RWPE1 (cell line): ENCODE measurements at regions of chr15 and their contacts with region 1.

Region 1: GRCh38 chr15:56383010-56383409 is 17.8 kb downstream of the TEX9 start:
- DNase-seq: no peak
- H3K27ac ChIP-seq: no peak overlapping the region
- CTCF ChIP-seq: no peak

Region 2: GRCh38 chr15:56168394-56168793 is 214.6 kb before region 1 on chr15:
- CTCF ChIA-PET with region 1: no interaction called
- POLR2A ChIA-PET with region 1: no interaction called
- DNase-seq: peak; percentile 31
- H3K27ac ChIP-seq: no peak overlapping the region
- CTCF ChIP-seq: no peak

Region 3: GRCh38 chr15:56817321-56818080 is 434.5 kb after region 1 on chr15:
- CTCF ChIA-PET with region 1: interaction called, 10 read pairs
- POLR2A ChIA-PET with region 1: no interaction called
- DNase-seq: peak; percentile 37
- H3K27ac ChIP-seq: no peak overlapping the region
- CTCF ChIP-seq: no peak